ENCODE measurements at regions of chr2 and their contacts with region 1.

Region 1: DNA sequence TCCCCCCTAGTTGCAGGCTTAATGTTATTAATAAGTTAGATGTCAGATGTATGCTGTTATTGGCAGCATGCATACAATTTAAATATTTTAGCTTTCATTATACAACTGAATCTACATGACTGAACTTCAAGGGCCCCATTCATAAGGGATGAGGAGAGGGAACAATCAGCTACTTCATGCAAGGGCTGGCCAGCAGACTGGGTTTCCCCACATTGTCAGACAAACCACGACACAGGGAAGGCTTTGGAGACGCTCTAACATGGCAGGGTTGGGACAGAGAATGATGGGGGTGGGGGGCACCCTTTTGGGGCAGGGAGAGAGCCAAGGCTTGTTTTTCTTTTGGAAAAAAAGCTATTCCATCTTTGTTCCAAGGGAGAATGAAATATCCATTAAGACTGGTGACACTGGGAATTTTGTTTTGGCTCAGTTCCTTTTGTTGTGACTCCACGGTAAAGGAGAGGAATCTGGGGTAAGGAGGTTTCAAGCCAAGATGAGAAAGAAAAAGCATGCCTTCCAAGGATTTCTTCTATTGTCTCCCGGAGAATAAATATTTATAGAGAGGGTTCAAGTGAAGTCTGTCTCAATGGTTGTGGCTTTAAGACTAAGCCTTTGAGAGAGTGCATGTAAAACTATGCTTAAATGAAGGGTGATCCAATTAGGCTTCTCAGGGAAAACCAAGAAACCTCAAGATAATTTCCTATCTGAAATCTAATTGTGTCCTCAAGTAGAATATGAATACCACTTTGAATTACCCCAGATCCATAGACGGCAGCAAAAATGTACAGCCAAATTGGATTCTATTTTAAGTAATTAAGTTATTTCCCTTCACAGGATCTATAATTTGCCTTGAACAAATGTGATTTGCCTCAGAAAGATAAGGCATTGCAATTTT is 5.4 kb downstream of the CXCR4 start:
- DNase-seq: peak in 3 of 14 experiments; percentile 28 to 57 (median 44)
- ATAC-seq: no peak
- H3K4me3 ChIP-seq: no peak overlapping the region
- H3K4me3 Mint-ChIP-seq: peak overlapping the region; percentile 99
- H3K27ac ChIP-seq: no peak overlapping the region
- H3K27ac Mint-ChIP-seq: peak overlapping the region; percentile 97
- H3K4me1 ChIP-seq: peaks cover 19% of the 10 kb centered on the region
- H3K4me1 Mint-ChIP-seq: peaks cover 44% of the 10 kb centered on the region
- H3K27me3 ChIP-seq: no peaks in the 10 kb centered on the region
- H3K27me3 Mint-ChIP-seq: peaks cover 14% of the 10 kb centered on the region
- CTCF ChIP-seq: no peak

Region 2: DNA sequence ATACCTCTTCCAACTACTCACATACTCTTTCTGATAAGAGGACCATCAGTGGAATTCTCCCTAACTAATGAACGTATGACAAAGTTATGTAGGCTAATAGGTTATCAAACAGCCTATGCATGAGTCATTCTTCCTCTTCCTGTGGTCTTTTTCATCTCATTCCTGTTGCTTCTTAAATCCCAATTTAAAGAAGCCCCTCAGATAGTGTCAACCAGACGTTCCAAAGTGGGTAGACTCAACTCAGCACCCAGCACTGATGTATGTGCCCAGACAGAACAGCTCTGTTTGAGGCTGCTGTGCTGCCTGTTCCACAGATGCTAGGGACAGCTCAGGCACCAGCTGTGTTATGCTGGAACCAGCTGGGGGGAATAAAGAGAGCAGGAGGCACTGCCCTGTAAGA is 47.2 kb before region 1 on chr2:
- CTCF ChIA-PET with region 1: no interaction called
- POLR2A ChIA-PET with region 1: interaction called, 3 read pairs
- intact Hi-C with region 1: loop called in 1 of 2 experiments (anchors 5 kb)
- DNase-seq: peak in 2 of 14 experiments; percentile 27 to 50
- ATAC-seq: no peak
- H3K4me3 ChIP-seq: no peak overlapping the region
- H3K4me3 Mint-ChIP-seq: no peak overlapping the region
- H3K27ac ChIP-seq: no peak overlapping the region
- H3K27ac Mint-ChIP-seq: no peak overlapping the region
- H3K4me1 ChIP-seq: peaks cover 25% of the 10 kb centered on the region
- H3K4me1 Mint-ChIP-seq: peaks cover 58% of the 10 kb centered on the region
- H3K27me3 ChIP-seq: no peaks in the 10 kb centered on the region
- H3K27me3 Mint-ChIP-seq: no peaks in the 10 kb centered on the region
- CTCF ChIP-seq: no peak

Region 3: DNA sequence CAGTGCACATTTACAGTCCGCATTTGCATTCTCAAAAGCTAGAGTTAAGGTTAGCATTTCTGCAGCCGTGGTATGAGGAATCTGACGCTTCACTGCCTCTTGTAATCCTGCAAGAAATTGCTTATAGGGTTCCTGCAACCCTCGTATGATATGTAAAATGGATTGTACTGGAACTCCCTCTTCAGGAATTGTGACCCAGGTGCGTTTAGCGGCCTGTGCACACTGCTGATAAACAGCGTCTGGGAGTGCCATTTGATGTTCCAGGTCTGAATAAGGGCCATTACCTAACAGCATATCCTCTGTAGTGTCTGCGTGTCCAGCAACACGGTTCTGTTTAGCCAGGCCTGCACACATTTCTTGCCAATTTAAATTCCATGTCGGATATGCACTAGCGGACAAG is 37.1 kb before region 1 on chr2:
- CTCF ChIA-PET with region 1: no interaction called
- POLR2A ChIA-PET with region 1: no interaction called
- intact Hi-C with region 1: no loop called
- DNase-seq: no peak
- ATAC-seq: no peak
- H3K4me3 ChIP-seq: no peak overlapping the region
- H3K4me3 Mint-ChIP-seq: no peak overlapping the region
- H3K27ac ChIP-seq: no peak overlapping the region
- H3K27ac Mint-ChIP-seq: no peak overlapping the region
- H3K4me1 ChIP-seq: no peaks in the 10 kb centered on the region
- H3K4me1 Mint-ChIP-seq: no peaks in the 10 kb centered on the region
- H3K27me3 ChIP-seq: no peaks in the 10 kb centered on the region
- H3K27me3 Mint-ChIP-seq: no peaks in the 10 kb centered on the region
- CTCF ChIP-seq: no peak

Region 4: DNA sequence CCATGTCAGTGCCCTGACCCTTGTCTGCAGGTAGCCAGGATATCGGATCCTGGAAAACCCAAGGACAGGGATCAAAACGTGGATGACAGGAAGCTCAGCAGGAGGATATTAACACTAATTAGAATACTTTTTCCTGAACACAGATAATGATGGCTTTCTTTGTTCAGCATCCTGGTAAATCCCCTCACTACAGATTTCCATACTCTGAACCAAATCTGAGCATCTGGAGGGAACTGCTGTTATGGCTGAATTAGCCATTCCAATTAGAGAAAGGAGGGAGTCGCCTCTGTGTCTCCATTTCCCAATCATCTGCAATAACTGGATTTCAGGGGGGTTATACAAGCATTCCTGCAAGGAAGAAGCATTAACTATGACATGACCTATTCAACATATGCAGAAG is 19.0 kb before region 1 on chr2:
- CTCF ChIA-PET with region 1: no interaction called
- POLR2A ChIA-PET with region 1: no interaction called
- intact Hi-C with region 1: no loop called
- DNase-seq: no peak
- ATAC-seq: no peak
- H3K4me3 ChIP-seq: no peak overlapping the region
- H3K4me3 Mint-ChIP-seq: no peak overlapping the region
- H3K27ac ChIP-seq: no peak overlapping the region
- H3K27ac Mint-ChIP-seq: no peak overlapping the region
- H3K4me1 ChIP-seq: no peaks in the 10 kb centered on the region
- H3K4me1 Mint-ChIP-seq: peaks cover 19% of the 10 kb centered on the region
- H3K27me3 ChIP-seq: no peaks in the 10 kb centered on the region
- H3K27me3 Mint-ChIP-seq: no peaks in the 10 kb centered on the region
- CTCF ChIP-seq: no peak

Measured in CD4-positive, alpha-beta T cell (primary cell).